ENCODE measurements at regions of chr10 and their contacts with region 1.

Region 1: GRCh38 chr10:5184987-5185775 is at the start of gene AKR1C8:
- DNase-seq: no peak
- ATAC-seq: peak in 1 of 8 donors; percentile 52
- H3K4me3 ChIP-seq: no peak within 1 kb of the TSS
- H3K27ac ChIP-seq: peak within 1 kb of the TSS in 2 of 10 donors; percentile 11 to 25
- H3K4me1 ChIP-seq: no peaks in the 10 kb centered on the region
- H3K27me3 ChIP-seq: no peaks in the 10 kb centered on the region
- CTCF ChIP-seq: no peak
- total RNA-seq, gene AKR1C8: 0.39 to 0.51 TPM in 2 of 10 donors, not detected in the others

Region 2: DNA sequence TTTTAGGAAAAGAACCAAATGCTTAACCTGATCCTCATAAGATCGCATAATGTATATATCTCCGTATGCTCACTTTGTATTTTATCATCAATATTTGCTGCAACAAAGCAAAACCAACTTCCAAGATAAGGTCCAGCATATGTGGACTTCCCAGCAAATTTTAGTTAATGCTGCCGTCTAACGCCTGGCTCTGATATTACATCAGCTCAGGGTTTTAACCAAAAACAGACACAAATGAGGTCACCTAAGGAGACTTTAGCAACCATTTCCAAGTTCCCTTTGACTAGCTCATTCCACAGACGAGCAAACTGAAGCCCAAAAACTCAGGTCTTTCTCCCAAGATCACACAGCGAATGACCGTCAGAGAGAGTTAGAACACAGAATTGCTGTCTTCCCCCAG is 120.2 kb after region 1 on chr10:
- intact Hi-C with region 1: loop called in 1 of 10 experiments (anchors 10 kb)
- DNase-seq: no peak
- ATAC-seq: peak in 2 of 8 donors; percentile 47 to 49
- H3K4me3 ChIP-seq: no peak overlapping the region
- H3K27ac ChIP-seq: no peak overlapping the region
- H3K4me1 ChIP-seq: no peaks in the 10 kb centered on the region
- H3K27me3 ChIP-seq: peaks cover 0 to 13% (median 0%) of the 10 kb centered on the region in 7 donors
- CTCF ChIP-seq: peak in 5 of 9 donors; percentile 10 to 43 (median 30)